ENCODE measurements at regions of chr14 and their contacts with region 1.

Region 1: DNA sequence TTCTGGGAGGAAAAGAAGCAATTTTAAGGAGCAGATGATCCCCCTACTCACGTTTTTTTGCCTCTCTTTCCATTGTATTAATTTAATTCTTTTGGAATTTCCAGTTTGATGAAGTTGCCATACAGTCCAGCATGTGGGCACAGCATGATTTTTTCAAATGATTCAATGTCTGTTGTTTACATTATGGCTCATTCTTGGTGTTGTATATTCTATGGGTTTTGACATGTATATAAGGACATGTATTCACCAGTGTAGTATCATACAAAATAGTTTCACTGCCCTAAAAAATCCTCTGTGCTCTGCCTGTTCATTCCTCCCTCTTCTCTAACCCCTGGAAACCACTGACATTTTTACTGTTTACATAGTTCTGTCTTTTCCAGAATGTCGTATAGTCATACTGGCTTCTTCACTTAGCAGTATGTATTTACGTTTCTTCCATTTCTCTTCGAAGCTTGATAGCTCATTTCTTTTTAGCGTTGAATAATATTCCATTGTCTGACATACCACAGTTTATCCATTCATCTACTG is 13.3 kb upstream of the KLHDC2 start:
- DNase-seq: no peak
- ATAC-seq: no peak
- H3K4me3 ChIP-seq: no peak overlapping the region
- H3K27ac ChIP-seq: no peak overlapping the region
- H3K4me1 ChIP-seq: no peaks in the 10 kb centered on the region
- H3K27me3 ChIP-seq: no peaks in the 10 kb centered on the region

Region 2: DNA sequence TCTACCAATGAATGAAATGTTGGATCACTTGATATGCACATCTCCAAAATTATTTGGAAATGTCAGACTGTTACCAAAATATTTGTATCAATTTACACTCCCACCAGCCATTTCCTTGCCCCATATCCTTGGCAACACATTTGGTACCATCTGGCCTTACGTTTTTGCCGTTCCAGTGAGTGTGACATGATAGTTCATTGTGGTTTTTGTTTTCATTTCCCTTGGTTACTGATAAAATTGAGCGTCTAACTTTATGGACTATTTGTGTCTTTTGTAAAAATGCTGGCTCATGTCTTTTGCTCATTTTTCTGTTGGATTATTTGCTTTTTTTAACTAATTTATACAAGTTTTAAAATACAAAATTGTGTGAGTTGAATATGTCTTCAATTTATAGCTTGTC is 50.7 kb before region 1 on chr14:
- intact Hi-C with region 1: loop called in 1 of 4 experiments (anchors 10 kb)
- DNase-seq: no peak
- ATAC-seq: no peak
- H3K4me3 ChIP-seq: no peak overlapping the region
- H3K27ac ChIP-seq: no peak overlapping the region
- H3K4me1 ChIP-seq: peaks cover 1% of the 10 kb centered on the region
- H3K27me3 ChIP-seq: no peaks in the 10 kb centered on the region

Region 3: DNA sequence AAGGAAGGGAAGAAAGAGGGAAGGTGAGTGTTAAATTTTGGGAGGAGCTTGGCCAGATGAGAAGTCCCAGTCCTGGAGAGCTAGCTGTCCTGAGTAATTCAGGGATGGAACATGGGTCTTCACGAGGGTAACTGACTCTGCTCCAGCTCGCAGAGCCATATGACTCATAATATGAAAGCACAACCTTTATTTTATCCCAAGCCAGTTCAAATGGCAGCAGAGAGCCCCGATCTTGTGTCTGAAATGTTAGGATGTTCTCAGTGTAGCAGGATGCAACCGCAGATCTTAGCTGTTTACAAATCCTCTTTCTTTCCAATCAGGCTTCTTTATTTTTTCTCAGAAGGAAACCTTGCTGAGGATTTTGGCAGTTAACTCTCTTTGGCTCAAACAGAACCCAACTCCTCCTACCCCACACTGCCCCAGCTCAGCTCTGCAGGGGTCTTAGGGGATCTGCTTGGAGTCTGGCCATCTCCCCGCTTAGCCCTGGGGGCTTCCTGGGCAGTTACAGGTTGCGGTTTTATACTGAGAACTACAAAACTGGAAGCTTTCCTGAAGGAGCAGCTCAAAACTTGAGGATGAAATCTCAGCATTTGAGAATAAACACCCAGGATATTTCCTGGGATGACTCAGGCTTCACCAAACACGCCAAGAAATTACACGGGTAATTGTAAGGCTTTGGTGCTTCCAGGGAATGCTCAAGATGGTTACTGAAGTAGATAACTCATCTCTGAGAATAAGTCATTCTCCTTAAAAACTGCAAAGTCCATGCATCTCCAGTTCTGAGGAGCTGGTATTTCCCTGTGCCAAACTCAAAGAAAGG is 269.2 kb after region 1 on chr14:
- intact Hi-C with region 1: no loop called
- DNase-seq: no peak
- ATAC-seq: peak in 1 of 2 donors; percentile 61
- H3K4me3 ChIP-seq: no peak overlapping the region
- H3K27ac ChIP-seq: peak overlapping the region; percentile 75
- H3K4me1 ChIP-seq: peaks cover 2% of the 10 kb centered on the region
- H3K27me3 ChIP-seq: no peaks in the 10 kb centered on the region

Measured in right cardiac atrium (tissue), 5 donors.